B cell (primary cell): ENCODE measurements at regions of chr7 and their contacts with region 1.

Region 1: DNA sequence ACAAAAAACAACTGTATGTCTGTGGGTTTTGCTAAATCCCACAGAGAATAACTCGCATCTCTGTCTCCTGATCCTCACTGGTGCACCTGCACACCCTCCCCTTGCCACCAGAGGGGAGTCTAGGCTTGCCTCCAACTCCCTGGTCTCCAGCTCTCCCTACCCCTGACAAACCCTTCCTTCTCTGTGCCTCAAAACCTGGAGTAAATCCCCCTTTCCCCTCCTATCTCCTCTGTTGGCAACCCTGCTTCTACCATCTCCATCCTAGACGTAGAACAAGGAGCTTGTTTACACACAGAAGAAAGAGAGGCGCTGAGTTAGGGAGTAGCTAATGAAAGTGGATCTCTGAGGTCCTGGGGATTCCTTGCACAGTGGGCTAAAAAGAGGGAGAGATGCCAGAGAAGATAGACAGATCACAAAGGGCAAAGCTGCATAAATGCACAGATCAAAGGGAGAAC is 6.0 kb downstream of the MBLAC1 start:
- DNase-seq: peak; percentile 80
- ATAC-seq: peak; percentile 80
- H3K4me3 ChIP-seq: no peak overlapping the region
- H3K4me3 Mint-ChIP-seq: no peak overlapping the region
- H3K27ac ChIP-seq: no peak overlapping the region
- H3K27ac Mint-ChIP-seq: peak overlapping the region; percentile 0
- H3K4me1 ChIP-seq: peaks cover 12 to 20% of the 10 kb centered on the region in 2 donors
- H3K4me1 Mint-ChIP-seq: peaks cover 15% of the 10 kb centered on the region
- H3K27me3 ChIP-seq: no peaks in the 10 kb centered on the region
- H3K27me3 Mint-ChIP-seq: no peaks in the 10 kb centered on the region
- CTCF ChIP-seq: peak; percentile 90

Region 2: GRCh38 chr7:99848420-99849216 is 284.1 kb before region 1 on chr7:
- CTCF ChIA-PET with region 1: no interaction called
- POLR2A ChIA-PET with region 1: no interaction called
- intact Hi-C with region 1: no loop called
- DNase-seq: no peak
- ATAC-seq: no peak
- H3K4me3 ChIP-seq: no peak overlapping the region
- H3K4me3 Mint-ChIP-seq: no peak overlapping the region
- H3K27ac ChIP-seq: no peak overlapping the region
- H3K27ac Mint-ChIP-seq: no peak overlapping the region
- H3K4me1 ChIP-seq: no peaks in the 10 kb centered on the region
- H3K4me1 Mint-ChIP-seq: no peaks in the 10 kb centered on the region
- H3K27me3 ChIP-seq: peaks cover 0 to 6% (median 2%) of the 10 kb centered on the region in 4 experiments
- H3K27me3 Mint-ChIP-seq: peaks cover 42% of the 10 kb centered on the region
- CTCF ChIP-seq: no peak

Region 3: GRCh38 chr7:99976626-99977025 is 156.1 kb before region 1 on chr7:
- CTCF ChIA-PET with region 1: interaction called, 52 read pairs
- POLR2A ChIA-PET with region 1: no interaction called
- intact Hi-C with region 1: no loop called
- DNase-seq: no peak
- ATAC-seq: no peak
- H3K4me3 ChIP-seq: no peak overlapping the region
- H3K4me3 Mint-ChIP-seq: no peak overlapping the region
- H3K27ac ChIP-seq: no peak overlapping the region
- H3K27ac Mint-ChIP-seq: no peak overlapping the region
- H3K4me1 ChIP-seq: no peaks in the 10 kb centered on the region
- H3K4me1 Mint-ChIP-seq: peaks cover 1% of the 10 kb centered on the region
- H3K27me3 ChIP-seq: peaks cover 0 to 13% (median 1%) of the 10 kb centered on the region in 4 experiments
- H3K27me3 Mint-ChIP-seq: peaks cover 33% of the 10 kb centered on the region
- CTCF ChIP-seq: no peak

Region 4: DNA sequence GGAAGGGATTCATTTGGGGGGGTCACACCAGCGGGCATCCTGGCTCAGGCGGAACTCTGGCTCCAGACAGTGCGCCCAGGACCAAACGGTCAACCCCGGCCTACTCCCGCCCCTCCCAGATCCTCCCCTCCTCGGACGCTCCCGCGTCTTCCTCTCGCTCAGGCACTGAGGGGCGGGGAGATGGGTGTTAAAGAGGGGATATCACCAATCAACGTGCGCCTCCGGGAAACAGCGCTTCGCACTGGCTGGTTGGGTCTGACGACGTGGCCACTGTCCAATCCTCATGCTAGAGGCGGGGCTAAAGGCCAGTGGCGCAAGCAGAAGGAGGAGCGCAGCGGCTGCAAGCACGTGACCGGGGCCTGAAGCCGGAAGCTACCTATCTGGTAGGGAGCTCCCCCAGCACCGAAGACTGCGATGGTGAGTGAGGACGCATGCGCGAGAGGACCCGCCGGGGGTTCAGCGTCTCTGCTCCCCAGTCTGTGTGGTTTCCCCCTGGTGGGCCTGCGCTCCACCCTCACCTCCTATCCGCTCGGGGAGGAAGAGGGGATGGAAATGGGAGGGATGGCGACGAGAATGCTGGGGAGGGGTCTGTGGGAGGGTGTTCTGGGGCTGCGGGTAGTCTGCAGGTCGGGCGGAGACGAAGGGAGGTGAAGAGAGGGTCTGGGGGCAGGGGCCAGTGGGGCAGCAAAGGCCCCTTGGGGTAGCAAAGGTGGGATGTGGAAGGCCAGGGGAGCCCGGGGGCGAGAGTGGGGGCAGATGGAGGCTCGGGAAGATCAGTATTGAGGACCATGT is 16.0 kb after region 1 on chr7 and contains the start of gene LAMTOR4:
- CTCF ChIA-PET with region 1: interaction called, 27 read pairs
- POLR2A ChIA-PET with region 1: interaction called, 7 read pairs
- intact Hi-C with region 1: loop called (anchors 1 kb)
- DNase-seq: peak; percentile 99
- ATAC-seq: peak; percentile 97
- H3K4me3 ChIP-seq: peak within 1 kb of the TSS; percentile 65 to 98 (median 75)
- H3K4me3 Mint-ChIP-seq: peak within 1 kb of the TSS; percentile 88
- H3K27ac ChIP-seq: peak within 1 kb of the TSS; percentile 82 to 97
- H3K27ac Mint-ChIP-seq: peak within 1 kb of the TSS; percentile 95
- H3K4me1 ChIP-seq: peaks cover 31 to 43% of the 10 kb centered on the region in 2 donors
- H3K4me1 Mint-ChIP-seq: peaks cover 34% of the 10 kb centered on the region
- H3K27me3 ChIP-seq: no peaks in the 10 kb centered on the region
- H3K27me3 Mint-ChIP-seq: no peaks in the 10 kb centered on the region
- CTCF ChIP-seq: no peak
- total RNA-seq, gene LAMTOR4: 214 TPM in 2 replicates

Region 5: DNA sequence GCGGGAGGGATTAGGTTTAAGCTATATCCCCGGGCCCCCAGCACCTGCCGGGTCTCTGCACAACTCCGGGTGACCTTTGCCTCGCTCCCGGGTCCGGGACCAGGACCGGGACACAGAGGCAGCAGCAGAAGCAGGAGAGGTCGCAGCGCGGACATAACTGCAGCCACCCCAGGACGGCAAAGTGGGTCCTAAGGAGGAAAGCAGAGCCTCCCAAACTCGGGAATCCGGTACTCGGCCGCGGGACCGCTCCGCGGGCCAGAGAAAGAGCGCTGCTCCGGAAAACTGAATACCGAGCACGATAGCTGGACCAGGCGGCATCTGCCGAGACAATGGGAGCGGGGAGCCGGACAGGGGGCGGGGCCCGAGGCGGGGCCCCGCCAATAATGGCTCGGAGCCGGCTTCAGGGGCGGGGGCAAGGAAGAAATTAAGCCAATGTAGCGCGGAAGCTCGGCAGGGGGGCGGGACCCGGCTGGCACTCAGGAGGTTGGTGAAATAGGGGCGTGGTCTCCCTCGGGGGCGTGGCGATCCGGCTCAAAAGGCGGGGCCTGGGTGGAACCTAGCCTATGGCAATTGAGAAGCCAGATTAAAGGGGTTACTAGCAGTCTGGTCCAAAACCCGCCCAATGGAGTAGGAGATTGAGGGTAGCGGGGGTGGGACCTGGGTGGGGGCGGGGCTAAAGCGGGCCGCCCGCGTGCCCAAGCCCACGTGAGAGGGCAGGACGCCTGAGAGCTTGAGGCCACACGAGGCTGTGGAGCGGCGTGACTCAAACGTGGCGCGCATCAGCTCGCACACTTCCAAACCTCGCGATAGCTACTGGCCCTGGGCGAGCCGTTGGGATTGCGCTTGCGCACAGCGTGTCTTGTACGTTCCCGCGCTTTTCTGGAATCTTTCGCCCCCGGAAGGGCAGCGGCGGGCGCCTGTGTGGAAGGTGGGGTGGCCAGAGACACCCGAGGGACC is 44.6 kb after region 1 on chr7 and contains the starts of genes GPC2 and STAG3:
- CTCF ChIA-PET with region 1: interaction called, 11 read pairs
- POLR2A ChIA-PET with region 1: interaction called, 3 read pairs
- intact Hi-C with region 1: no loop called
- DNase-seq: peak; percentile 97
- ATAC-seq: peak; percentile 94
- H3K4me3 ChIP-seq: peak within 1 kb of the TSS; percentile 64 to 78 (median 70)
- H3K4me3 Mint-ChIP-seq: peak within 1 kb of the TSS; percentile 73
- H3K27ac ChIP-seq: peak within 1 kb of the TSS in 1 of 2 donors; percentile 39
- H3K27ac Mint-ChIP-seq: peak within 1 kb of the TSS; percentile 27
- H3K4me1 ChIP-seq: peaks cover 11 to 22% of the 10 kb centered on the region in 2 donors
- H3K4me1 Mint-ChIP-seq: peaks cover 26% of the 10 kb centered on the region
- H3K27me3 ChIP-seq: no peaks in the 10 kb centered on the region
- H3K27me3 Mint-ChIP-seq: no peaks in the 10 kb centered on the region
- CTCF ChIP-seq: no peak
- total RNA-seq, gene GPC2: 4.1 and 6.1 TPM in 2 replicates
- total RNA-seq, gene STAG3: 22.0 and 24.8 TPM in 2 replicates

Region 6: GRCh38 chr7:100221231-100221718 is 88.6 kb after region 1 on chr7:
- CTCF ChIA-PET with region 1: interaction called, 66 read pairs
- POLR2A ChIA-PET with region 1: interaction called, 4 read pairs
- intact Hi-C with region 1: loop called (anchors 1 kb)
- DNase-seq: peak; percentile 84
- ATAC-seq: peak; percentile 56
- H3K4me3 ChIP-seq: peak overlapping the region in 4 of 5 experiments; percentile 53 to 65 (median 64)
- H3K4me3 Mint-ChIP-seq: peak overlapping the region; percentile 85
- H3K27ac ChIP-seq: peak overlapping the region; percentile 97 to 100
- H3K27ac Mint-ChIP-seq: peak overlapping the region; percentile 95
- H3K4me1 ChIP-seq: peaks cover 42 to 54% of the 10 kb centered on the region in 2 donors
- H3K4me1 Mint-ChIP-seq: peaks cover 74% of the 10 kb centered on the region
- H3K27me3 ChIP-seq: no peaks in the 10 kb centered on the region
- H3K27me3 Mint-ChIP-seq: no peaks in the 10 kb centered on the region
- CTCF ChIP-seq: no peak

Region 7: GRCh38 chr7:100407285-100408180 is 274.8 kb after region 1 on chr7:
- CTCF ChIA-PET with region 1: interaction called, 62 read pairs
- POLR2A ChIA-PET with region 1: no interaction called
- intact Hi-C with region 1: loop called (anchors 1 kb)
- DNase-seq: peak; percentile 86
- ATAC-seq: peak; percentile 92
- H3K4me3 ChIP-seq: no peak overlapping the region
- H3K4me3 Mint-ChIP-seq: no peak overlapping the region
- H3K27ac ChIP-seq: no peak overlapping the region
- H3K27ac Mint-ChIP-seq: no peak overlapping the region
- H3K4me1 ChIP-seq: peaks cover 15 to 20% of the 10 kb centered on the region in 2 donors
- H3K4me1 Mint-ChIP-seq: peaks cover 9% of the 10 kb centered on the region
- H3K27me3 ChIP-seq: no peaks in the 10 kb centered on the region
- H3K27me3 Mint-ChIP-seq: no peaks in the 10 kb centered on the region
- CTCF ChIP-seq: peak; percentile 81

Region 8: GRCh38 chr7:100538654-100539435 is 406.1 kb after region 1 on chr7 and contains the start of gene AGFG2:
- CTCF ChIA-PET with region 1: no interaction called
- POLR2A ChIA-PET with region 1: no interaction called
- intact Hi-C with region 1: no loop called
- DNase-seq: peak; percentile 100
- ATAC-seq: peak; percentile 97
- H3K4me3 ChIP-seq: peak within 1 kb of the TSS; percentile 62 to 84 (median 72)
- H3K4me3 Mint-ChIP-seq: peak within 1 kb of the TSS; percentile 91
- H3K27ac ChIP-seq: peak within 1 kb of the TSS in 1 of 2 donors; percentile 42
- H3K27ac Mint-ChIP-seq: peak within 1 kb of the TSS; percentile 76
- H3K4me1 ChIP-seq: peaks cover 14 to 23% of the 10 kb centered on the region in 2 donors
- H3K4me1 Mint-ChIP-seq: peaks cover 36% of the 10 kb centered on the region
- H3K27me3 ChIP-seq: no peaks in the 10 kb centered on the region
- H3K27me3 Mint-ChIP-seq: no peaks in the 10 kb centered on the region
- CTCF ChIP-seq: no peak
- total RNA-seq, gene AGFG2: 11.0 and 11.6 TPM in 2 replicates